Esophagus muscularis mucosa (tissue), 4 donors: ENCODE measurements at regions of chr6 and their contacts with region 1.

Region 1: GRCh38 chr6:154928325-154928922 is 66.7 kb upstream of the TIAM2 start:
- DNase-seq: no peak
- H3K4me3 ChIP-seq: no peak overlapping the region
- H3K27ac ChIP-seq: no peak overlapping the region
- H3K4me1 ChIP-seq: peaks cover 10 to 16% (median 12%) of the 10 kb centered on the region in 4 donors
- H3K27me3 ChIP-seq: no peaks in the 10 kb centered on the region
- CTCF ChIP-seq: peak; percentile 53 to 70 (median 61)
- EP300 ChIP-seq: no peak
- POLR2A ChIP-seq: no peak

Region 2: DNA sequence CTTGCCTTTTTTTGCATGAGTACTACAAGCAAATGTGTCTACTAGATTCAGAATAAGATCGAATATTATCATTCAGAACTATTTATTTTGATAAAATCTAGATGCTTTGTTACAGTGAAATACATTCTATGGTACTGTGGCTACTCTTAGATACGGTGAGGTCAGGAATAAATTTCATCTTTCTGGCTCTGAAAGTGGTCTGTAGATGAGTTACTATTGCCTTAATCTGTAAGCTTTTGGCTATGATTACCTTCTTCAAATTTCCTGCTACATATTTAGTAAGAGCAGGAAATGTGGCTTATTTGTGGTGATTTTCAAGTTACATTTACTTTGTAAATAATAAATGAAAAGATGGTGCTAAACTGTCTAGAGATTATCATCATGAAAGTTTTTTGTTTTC is 145.2 kb before region 1 on chr6:
- intact Hi-C with region 1: no loop called
- DNase-seq: no peak
- H3K4me3 ChIP-seq: no peak overlapping the region
- H3K27ac ChIP-seq: no peak overlapping the region
- H3K4me1 ChIP-seq: peaks cover 0 to 11% (median 6%) of the 10 kb centered on the region in 4 donors
- H3K27me3 ChIP-seq: no peaks in the 10 kb centered on the region
- CTCF ChIP-seq: no peak
- EP300 ChIP-seq: no peak
- POLR2A ChIP-seq: no peak

Region 3: DNA sequence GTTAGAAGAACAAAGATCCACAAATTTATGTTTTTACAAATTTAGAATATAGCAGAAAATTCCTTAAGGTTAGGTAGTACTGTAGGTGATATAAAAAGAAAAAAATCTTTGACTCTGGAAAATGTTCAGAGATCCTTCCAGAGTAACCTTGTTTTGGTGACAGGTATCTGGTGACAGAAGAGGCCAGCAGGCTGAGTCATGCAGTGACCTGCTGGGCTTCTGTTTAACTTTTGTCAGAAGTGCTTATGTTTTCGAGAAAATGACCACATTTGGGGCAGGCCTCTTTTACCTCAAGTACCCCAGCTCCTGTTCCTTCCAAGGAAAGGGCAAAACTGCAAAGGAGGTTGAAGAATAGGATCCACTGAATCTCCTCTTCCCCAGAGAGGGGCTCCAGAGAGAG is 324.9 kb after region 1 on chr6:
- intact Hi-C with region 1: loop called (anchors 5 kb)
- DNase-seq: no peak
- H3K4me3 ChIP-seq: no peak overlapping the region
- H3K27ac ChIP-seq: peak overlapping the region; percentile 32 to 53 (median 48)
- H3K4me1 ChIP-seq: peaks cover 4 to 19% (median 15%) of the 10 kb centered on the region in 4 donors
- H3K27me3 ChIP-seq: no peaks in the 10 kb centered on the region
- CTCF ChIP-seq: no peak
- EP300 ChIP-seq: no peak
- POLR2A ChIP-seq: no peak